GM12878 (cell line): ENCODE measurements at regions of chr10 and their contacts with region 1.

Region 1: GRCh38 chr10:2839081-2839725 is 228.1 kb upstream of the PFKP start:
- DNase-seq: no peak
- ATAC-seq: peak; percentile 63
- H3K4me3 ChIP-seq: no peak overlapping the region
- H3K27ac ChIP-seq: no peak overlapping the region
- H3K4me1 ChIP-seq: no peaks in the 10 kb centered on the region
- H3K27me3 ChIP-seq: no peaks in the 10 kb centered on the region; a peak in 1 of 4 replicates
- CTCF ChIP-seq: peak; percentile 40 to 64 (median 62)
- EP300 ChIP-seq: no peak
- POLR2A ChIP-seq: no peak
- RAD21 ChIP-seq: peak; percentile 26; the same call in 1 of the 2 replicates

Region 2: GRCh38 chr10:2828741-2829140 is 10.5 kb before region 1 on chr10:
- CTCF ChIA-PET with region 1: no interaction called
- POLR2A ChIA-PET with region 1: no interaction called
- RAD21 ChIA-PET with region 1: no interaction called
- SMC1A ChIA-PET with region 1: no interaction called
- in situ Hi-C with region 1: no loop called
- intact Hi-C with region 1: loop called (anchors 1 kb)
- DNase-seq: no peak
- ATAC-seq: no peak
- H3K4me3 ChIP-seq: no peak overlapping the region
- H3K27ac ChIP-seq: no peak overlapping the region
- H3K4me1 ChIP-seq: no peaks in the 10 kb centered on the region
- H3K27me3 ChIP-seq: peaks cover 0 to 1% of the 10 kb centered on the region in 2 experiments; a peak in 1 of 4 replicates
- CTCF ChIP-seq: no peak
- EP300 ChIP-seq: no peak
- POLR2A ChIP-seq: no peak
- RAD21 ChIP-seq: no peak

Region 3: DNA sequence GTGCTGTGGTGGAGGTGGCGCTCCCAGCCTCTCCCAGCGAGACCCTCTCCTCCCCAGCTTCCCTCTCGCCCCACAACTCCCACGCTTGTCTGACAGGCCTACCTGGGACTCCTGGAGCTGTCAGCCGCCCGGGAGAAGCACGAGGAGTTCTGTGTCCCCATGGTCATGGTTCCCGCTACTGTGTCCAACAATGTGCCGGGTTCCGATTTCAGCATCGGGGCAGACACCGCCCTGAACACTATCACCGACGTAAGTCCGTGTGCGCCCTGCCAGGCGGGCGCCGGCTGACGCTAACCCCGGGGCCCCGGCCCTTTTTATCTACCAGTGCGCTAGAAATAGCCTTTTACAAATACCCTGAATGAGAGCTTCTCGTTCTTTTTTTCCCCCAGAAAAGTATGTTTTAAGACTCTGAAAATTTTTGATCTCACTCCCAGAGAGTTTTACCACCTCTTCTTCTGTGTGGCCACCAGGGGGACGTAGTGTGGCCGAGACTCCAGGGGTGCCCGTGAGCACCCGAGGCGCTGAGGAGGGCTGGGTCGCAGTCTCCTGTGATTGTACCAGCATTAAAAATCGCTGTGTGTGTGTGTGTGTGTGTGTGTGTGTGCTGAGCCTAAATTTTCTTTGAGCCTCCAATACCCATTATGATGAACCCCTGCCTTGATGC is 280.7 kb after region 1 on chr10:
- CTCF ChIA-PET with region 1: no interaction called
- POLR2A ChIA-PET with region 1: no interaction called
- RAD21 ChIA-PET with region 1: no interaction called
- SMC1A ChIA-PET with region 1: no interaction called
- in situ Hi-C with region 1: no loop called
- intact Hi-C with region 1: no loop called
- DNase-seq: no peak
- ATAC-seq: peak; percentile 67
- H3K4me3 ChIP-seq: no peak overlapping the region
- H3K27ac ChIP-seq: no peak overlapping the region
- H3K4me1 ChIP-seq: no peaks in the 10 kb centered on the region
- H3K27me3 ChIP-seq: no peaks in the 10 kb centered on the region
- CTCF ChIP-seq: peak in 2 of 3 experiments; percentile 41 to 44; a peak in 4 of 6 replicates
- EP300 ChIP-seq: no peak
- POLR2A ChIP-seq: no peak
- RAD21 ChIP-seq: no peak